Activated CD8-positive, alpha-beta T cell treated with anti-CD3 and anti-CD28 coated beads for 36 hours (primary cell): ENCODE measurements at regions of chr11 and their contacts with region 1.

Region 1: DNA sequence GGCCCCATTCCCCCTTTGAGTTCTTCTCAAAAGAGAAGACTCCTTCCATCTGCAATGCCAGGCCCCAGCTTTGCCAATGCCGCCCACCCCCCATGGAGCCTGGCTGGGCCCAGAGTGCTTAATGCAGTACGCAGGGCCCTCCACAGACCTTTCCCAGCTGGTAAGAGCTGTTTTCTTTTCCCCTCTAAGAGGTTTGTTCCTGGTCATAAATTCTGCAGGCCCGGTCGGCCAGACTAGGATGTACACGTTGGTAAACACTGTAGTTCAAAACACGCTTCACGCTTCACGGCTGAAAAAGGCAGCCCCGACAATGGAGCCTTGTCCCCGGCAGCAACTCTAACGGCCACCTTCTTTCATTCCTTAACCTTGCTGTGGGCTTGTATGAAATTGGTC is 60.2 kb upstream of the MYEOV start:
- DNase-seq: no peak
- ATAC-seq: no peak
- H3K4me3 Mint-ChIP-seq: no peak overlapping the region
- H3K27ac Mint-ChIP-seq: no peak overlapping the region
- H3K4me1 Mint-ChIP-seq: peaks cover 10% of the 10 kb centered on the region
- H3K27me3 Mint-ChIP-seq: peaks cover 7% of the 10 kb centered on the region
- CTCF ChIP-seq: no peak

Region 2: GRCh38 chr11:69122642-69123431 is 110.9 kb before region 1 on chr11:
- CTCF ChIA-PET with region 1: no interaction called
- POLR2A ChIA-PET with region 1: no interaction called
- intact Hi-C with region 1: loop called (anchors 10 kb)
- DNase-seq: peak; percentile 95
- ATAC-seq: peak; percentile 93
- H3K4me3 Mint-ChIP-seq: peak overlapping the region; percentile 14
- H3K27ac Mint-ChIP-seq: peak overlapping the region; percentile 86
- H3K4me1 Mint-ChIP-seq: peaks cover 38% of the 10 kb centered on the region
- H3K27me3 Mint-ChIP-seq: no peaks in the 10 kb centered on the region
- CTCF ChIP-seq: no peak